ENCODE measurements at regions of chr1 and their contacts with region 1.

Region 1: DNA sequence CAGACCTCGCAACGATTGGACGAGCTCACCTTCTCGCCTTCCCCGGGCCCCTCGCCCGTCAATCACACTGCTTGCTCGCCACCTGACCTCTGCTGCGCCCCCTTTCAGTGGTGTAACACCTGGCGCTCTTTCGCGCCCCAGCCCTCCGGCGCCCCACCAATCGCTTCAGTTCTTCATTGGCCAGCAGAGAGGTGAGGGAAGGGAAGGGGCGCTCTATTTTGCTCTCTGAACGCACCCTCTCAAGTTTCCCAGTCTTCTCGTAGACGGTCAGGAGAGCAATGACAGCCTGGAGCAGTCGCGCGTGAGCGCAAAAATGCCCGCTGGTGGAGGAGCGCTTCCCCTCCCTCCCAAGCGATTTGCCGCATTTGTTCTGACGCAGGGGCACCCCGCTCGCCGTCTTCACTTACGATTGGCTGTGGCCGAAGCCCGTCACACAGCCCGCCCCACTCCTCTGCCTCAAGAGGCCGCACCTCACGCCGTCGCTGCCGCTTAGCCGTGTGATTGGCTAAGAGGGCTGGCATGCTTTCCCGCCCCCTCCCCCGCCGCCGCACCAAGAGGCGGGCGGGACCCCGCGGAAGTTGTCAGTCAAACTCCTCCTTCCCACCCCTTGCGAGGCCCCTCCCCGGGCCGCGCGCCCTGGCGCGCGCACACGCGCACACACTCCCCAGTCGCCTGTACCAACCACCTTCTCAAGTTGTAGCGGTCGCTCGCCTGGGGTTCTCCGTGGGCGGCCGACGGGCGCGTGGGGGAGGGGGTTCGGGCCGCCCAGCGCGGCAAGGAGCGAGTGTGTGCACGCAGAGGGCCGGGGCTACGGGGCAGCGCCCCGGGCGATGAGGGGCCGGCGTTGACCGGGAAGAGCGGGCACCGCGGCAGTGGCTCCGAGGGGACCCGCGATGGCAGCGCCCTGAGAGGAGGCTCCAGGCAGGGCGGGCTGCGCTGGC is at the start of gene PPP2R5A:
- DNase-seq: peak; percentile 99
- H3K4me3 ChIP-seq: peak within 1 kb of the TSS; percentile 94 to 97
- H3K27ac ChIP-seq: peak within 1 kb of the TSS; percentile 99
- H3K4me1 ChIP-seq: no peaks in the 10 kb centered on the region
- H3K27me3 ChIP-seq: no peaks in the 10 kb centered on the region
- CTCF ChIP-seq: peak in 2 of 4 experiments; percentile 23 to 40
- POLR2A ChIP-seq: peak; percentile 95
- total RNA-seq, gene PPP2R5A: 33.5 to 49.5 TPM

Region 2: GRCh38 chr1:211643324-211644212 is 641.4 kb before region 1 on chr1:
- intact Hi-C with region 1: no loop called
- DNase-seq: peak; percentile 82
- H3K4me3 ChIP-seq: no peak overlapping the region
- H3K27ac ChIP-seq: peak overlapping the region; percentile 40 to 43
- H3K4me1 ChIP-seq: peaks cover 2% of the 10 kb centered on the region
- H3K27me3 ChIP-seq: no peaks in the 10 kb centered on the region
- CTCF ChIP-seq: no peak
- POLR2A ChIP-seq: no peak

Region 3: DNA sequence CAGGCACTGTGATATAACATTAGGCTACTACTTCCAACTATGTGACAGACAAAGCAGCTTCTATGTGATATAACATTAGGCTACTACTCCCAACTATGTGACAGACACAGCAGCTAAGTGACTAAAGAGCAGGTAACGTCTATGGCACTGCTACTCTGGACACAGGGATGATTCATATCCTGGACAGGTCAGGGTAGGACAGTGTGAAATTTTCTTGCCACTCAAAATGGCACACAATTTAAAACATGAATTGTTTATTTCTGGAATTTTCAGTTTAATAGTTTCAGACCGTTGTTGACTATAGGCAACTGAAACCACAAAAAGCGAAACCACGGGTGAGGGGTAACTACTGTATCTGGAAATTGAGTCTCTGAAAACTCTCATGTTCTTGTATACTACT is 244.4 kb before region 1 on chr1:
- intact Hi-C with region 1: no loop called
- DNase-seq: no peak
- H3K4me3 ChIP-seq: no peak overlapping the region
- H3K27ac ChIP-seq: no peak overlapping the region
- H3K4me1 ChIP-seq: peaks cover 5% of the 10 kb centered on the region
- H3K27me3 ChIP-seq: no peaks in the 10 kb centered on the region
- CTCF ChIP-seq: no peak
- POLR2A ChIP-seq: no peak

Region 4: GRCh38 chr1:212162635-212163034 is 122.4 kb before region 1 on chr1:
- intact Hi-C with region 1: loop called (anchors 5 kb)
- DNase-seq: peak; percentile 11
- H3K4me3 ChIP-seq: no peak overlapping the region
- H3K27ac ChIP-seq: no peak overlapping the region
- H3K4me1 ChIP-seq: no peaks in the 10 kb centered on the region
- H3K27me3 ChIP-seq: no peaks in the 10 kb centered on the region
- CTCF ChIP-seq: no peak
- POLR2A ChIP-seq: no peak

Region 5: DNA sequence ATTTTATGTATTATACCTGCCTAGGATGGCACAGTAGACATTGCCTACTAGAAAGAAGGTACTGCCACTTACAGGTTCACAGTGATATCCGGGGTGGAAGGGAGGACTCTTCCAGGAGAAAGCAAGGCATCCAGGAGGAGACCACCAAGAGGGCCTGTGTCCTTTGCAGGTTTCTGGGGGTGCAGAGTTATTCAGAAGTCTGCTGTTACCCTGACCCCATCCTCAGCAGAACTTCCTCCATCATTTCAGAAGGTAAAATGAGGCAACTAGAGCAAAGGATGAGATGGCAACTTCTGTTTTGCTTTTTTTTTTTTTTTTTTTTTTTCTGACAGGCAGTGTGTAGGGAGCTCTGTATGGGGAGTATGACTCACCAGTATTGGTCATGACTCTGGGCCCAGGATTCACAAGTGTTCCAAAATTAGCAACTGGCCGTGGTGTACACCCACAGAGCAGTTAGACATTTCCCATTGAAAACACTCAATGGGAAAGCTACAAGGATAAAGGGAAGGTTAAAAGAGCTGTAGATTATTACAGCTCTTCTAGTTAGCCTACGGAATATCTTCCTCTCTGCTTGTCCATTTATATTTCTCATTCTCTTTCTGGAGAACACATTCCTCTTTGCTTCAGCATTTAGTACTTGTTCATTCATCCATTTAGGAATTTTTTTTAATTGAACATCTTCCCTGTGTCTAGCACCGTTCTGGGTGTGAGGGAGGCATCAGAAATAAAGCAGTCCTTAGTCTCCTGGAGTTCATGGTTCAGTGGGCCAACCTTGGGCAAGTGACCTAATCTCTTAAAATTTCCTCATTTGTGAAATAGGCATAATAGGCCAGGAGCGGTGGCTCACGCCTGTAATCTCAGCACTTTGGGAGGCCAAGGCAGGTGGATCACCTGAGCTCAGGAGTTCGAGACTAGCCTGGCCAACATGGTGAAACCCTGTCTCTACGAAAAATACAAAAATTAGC is 50.3 kb before region 1 on chr1:
- intact Hi-C with region 1: loop called (anchors 5 kb)
- DNase-seq: no peak
- H3K4me3 ChIP-seq: no peak overlapping the region
- H3K27ac ChIP-seq: no peak overlapping the region
- H3K4me1 ChIP-seq: no peaks in the 10 kb centered on the region
- H3K27me3 ChIP-seq: no peaks in the 10 kb centered on the region
- CTCF ChIP-seq: no peak
- POLR2A ChIP-seq: no peak

Measured in prostate gland (tissue), 2 donors.